Aorta (tissue), 5 donors: ENCODE measurements at regions of chr7 and their contacts with region 1.

Region 1: DNA sequence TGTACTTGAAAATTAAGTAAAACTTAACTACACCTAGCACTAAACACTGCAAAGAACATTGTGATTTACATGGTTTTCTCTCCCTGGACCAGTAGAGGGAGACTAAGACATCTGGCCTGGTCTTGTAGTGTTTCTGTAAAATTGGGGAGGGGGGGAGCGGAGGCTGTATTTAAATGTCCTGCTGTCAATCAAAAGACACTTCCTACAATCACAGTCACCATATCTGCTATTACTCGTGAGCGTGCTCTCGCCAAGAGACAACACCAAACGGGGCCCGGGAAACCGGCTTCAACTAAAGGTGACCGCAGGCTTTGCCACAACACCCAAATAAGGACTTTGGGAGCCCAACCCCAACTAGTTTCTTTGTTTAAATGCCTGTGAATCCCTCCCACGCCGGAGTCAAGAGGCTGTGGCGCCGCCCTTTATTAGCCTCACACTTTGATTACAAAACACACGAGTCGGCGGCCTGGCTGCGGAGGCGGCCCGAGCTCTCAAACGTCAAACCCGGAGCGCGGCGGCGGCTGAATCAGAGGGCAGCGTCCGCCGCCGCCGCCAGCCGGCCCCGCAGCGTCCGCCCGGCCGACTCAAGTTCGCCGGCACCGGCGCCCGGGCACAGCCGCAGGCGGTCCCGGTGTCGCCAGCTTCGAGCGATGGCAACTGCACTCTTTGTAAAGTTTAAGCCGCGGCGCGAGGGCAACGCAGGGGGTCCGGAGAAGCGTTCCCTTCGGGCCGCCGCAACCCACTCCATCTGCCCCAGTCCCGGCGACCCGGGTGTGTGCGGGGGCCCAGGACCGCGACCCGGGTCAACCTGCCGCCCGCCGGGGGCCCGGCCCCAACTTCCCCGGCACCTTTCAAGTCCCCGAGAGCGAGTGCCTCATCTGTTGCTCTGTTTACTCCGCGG is 1.3 kb downstream of the KDM7A start:
- DNase-seq: peak; percentile 93 to 96
- ATAC-seq: peak; percentile 86
- H3K4me3 ChIP-seq: peak overlapping the region; percentile 98 to 100
- H3K27ac ChIP-seq: peak overlapping the region; percentile 95 to 97
- H3K4me1 ChIP-seq: no peaks in the 10 kb centered on the region
- H3K27me3 ChIP-seq: no peaks in the 10 kb centered on the region

Region 2: GRCh38 chr7:140297192-140297591 is 121.7 kb after region 1 on chr7:
- intact Hi-C with region 1: no loop called
- DNase-seq: no peak
- ATAC-seq: no peak
- H3K4me3 ChIP-seq: no peak overlapping the region
- H3K27ac ChIP-seq: no peak overlapping the region
- H3K4me1 ChIP-seq: no peaks in the 10 kb centered on the region
- H3K27me3 ChIP-seq: no peaks in the 10 kb centered on the region

Region 3: GRCh38 chr7:140326116-140326928 is 150.9 kb after region 1 on chr7:
- intact Hi-C with region 1: loop called (anchors 2 kb)
- DNase-seq: peak; percentile 67 to 86
- ATAC-seq: peak; percentile 83
- H3K4me3 ChIP-seq: no peak overlapping the region
- H3K27ac ChIP-seq: no peak overlapping the region
- H3K4me1 ChIP-seq: no peaks in the 10 kb centered on the region
- H3K27me3 ChIP-seq: no peaks in the 10 kb centered on the region